ENCODE measurements at regions of chr11 and their contacts with region 1.

Region 1: DNA sequence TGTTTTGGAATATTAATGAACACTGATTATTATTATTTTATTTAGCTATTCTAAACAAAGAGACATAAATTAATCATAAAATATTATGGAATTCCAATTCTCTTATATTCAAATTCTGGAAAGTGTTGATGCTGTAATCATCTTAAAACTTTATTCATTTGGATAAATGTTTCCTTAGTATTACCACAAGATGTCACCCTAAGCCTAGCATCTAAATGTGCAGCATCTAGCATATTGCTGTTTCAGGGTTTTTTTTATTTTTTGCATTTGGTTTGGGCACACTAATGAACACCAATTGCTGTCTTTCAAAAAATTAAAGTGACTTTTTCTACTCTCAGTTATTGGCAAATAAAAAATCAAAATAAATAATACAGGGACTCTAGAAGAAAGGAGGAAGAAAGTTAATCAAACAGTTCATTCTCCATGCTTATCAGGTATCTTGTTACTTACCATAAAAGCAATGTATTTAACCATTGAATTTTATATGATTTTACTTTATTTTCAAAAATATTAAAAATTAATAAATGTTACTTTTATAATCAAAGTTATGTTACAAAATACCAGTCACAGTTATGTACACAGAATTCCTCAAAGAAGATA is 31.8 kb downstream of the DLG2 start:
- DNase-seq: no peak
- ATAC-seq: no peak
- H3K4me3 Mint-ChIP-seq: no peak overlapping the region
- H3K27ac Mint-ChIP-seq: no peak overlapping the region
- H3K4me1 Mint-ChIP-seq: no peaks in the 10 kb centered on the region
- H3K27me3 Mint-ChIP-seq: no peaks in the 10 kb centered on the region
- CTCF ChIP-seq: peak; percentile 35

Region 2: DNA sequence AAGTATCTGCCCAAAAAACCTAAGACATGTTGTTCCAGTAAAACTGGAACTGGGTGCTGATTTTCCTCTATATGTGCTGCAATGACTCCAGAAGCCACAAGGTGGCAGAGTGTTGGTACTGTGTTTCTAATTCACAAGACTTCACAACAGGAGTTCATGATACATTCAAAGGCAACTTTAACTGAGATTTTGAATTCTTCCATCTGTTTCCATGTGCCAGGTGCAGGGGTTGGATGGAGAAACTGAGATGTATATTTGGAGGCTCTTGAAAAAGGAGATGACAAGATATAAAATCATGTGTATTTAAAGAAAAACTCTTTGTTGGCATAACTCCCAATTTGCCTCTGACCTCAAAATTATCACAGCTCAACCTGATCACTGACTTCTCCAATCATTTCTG is 1210.7 kb before region 1 on chr11:
- CTCF ChIA-PET with region 1: interaction called, 8 read pairs
- POLR2A ChIA-PET with region 1: no interaction called
- intact Hi-C with region 1: loop called (anchors 1 kb)
- DNase-seq: no peak
- ATAC-seq: no peak
- H3K4me3 Mint-ChIP-seq: no peak overlapping the region
- H3K27ac Mint-ChIP-seq: no peak overlapping the region
- H3K4me1 Mint-ChIP-seq: no peaks in the 10 kb centered on the region
- H3K27me3 Mint-ChIP-seq: no peaks in the 10 kb centered on the region
- CTCF ChIP-seq: peak; percentile 93

Region 3: DNA sequence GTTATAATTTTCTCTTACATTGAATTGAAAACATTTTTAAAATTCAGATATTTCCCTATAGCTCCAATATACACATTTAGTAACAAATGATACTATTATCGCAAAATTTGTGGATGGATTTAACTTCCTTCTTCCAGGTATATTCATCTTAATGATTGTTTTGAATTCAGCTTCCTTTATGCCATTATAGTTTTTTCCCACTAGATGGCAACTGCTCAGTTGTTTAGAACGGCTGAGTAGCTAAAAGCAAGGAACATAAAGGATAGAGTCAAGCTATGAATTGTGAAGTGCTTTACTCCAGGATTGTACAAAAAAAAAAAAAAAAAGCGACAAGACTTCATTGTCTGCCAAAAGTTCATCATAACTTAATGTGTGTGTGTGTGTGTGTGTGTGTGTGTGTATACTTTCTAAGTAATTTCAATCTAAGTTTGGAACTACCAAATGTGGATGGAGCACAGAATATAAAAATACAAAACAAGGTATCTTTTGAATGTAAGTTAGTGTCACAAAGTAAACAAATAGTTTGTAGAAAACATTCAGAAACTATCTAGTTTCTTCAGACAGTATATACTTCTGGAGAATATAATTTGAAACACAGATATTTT is 814.6 kb before region 1 on chr11:
- CTCF ChIA-PET with region 1: interaction called, 16 read pairs
- POLR2A ChIA-PET with region 1: no interaction called
- intact Hi-C with region 1: loop called (anchors 1 kb)
- DNase-seq: no peak
- ATAC-seq: no peak
- H3K4me3 Mint-ChIP-seq: no peak overlapping the region
- H3K27ac Mint-ChIP-seq: no peak overlapping the region
- H3K4me1 Mint-ChIP-seq: no peaks in the 10 kb centered on the region
- H3K27me3 Mint-ChIP-seq: no peaks in the 10 kb centered on the region
- CTCF ChIP-seq: no peak

Region 4: GRCh38 chr11:85664615-85665481 is 69.5 kb after region 1 on chr11 and contains the start of gene CREBZF:
- CTCF ChIA-PET with region 1: no interaction called
- POLR2A ChIA-PET with region 1: no interaction called
- intact Hi-C with region 1: loop called (anchors 1 kb)
- DNase-seq: peak; percentile 96
- ATAC-seq: peak; percentile 86
- H3K4me3 Mint-ChIP-seq: peak within 1 kb of the TSS; percentile 95
- H3K27ac Mint-ChIP-seq: peak within 1 kb of the TSS; percentile 93
- H3K4me1 Mint-ChIP-seq: peaks cover 45% of the 10 kb centered on the region
- H3K27me3 Mint-ChIP-seq: no peaks in the 10 kb centered on the region
- CTCF ChIP-seq: no peak
- total RNA-seq, gene CREBZF: 46.1 and 60.3 TPM in 2 replicates

Region 5: DNA sequence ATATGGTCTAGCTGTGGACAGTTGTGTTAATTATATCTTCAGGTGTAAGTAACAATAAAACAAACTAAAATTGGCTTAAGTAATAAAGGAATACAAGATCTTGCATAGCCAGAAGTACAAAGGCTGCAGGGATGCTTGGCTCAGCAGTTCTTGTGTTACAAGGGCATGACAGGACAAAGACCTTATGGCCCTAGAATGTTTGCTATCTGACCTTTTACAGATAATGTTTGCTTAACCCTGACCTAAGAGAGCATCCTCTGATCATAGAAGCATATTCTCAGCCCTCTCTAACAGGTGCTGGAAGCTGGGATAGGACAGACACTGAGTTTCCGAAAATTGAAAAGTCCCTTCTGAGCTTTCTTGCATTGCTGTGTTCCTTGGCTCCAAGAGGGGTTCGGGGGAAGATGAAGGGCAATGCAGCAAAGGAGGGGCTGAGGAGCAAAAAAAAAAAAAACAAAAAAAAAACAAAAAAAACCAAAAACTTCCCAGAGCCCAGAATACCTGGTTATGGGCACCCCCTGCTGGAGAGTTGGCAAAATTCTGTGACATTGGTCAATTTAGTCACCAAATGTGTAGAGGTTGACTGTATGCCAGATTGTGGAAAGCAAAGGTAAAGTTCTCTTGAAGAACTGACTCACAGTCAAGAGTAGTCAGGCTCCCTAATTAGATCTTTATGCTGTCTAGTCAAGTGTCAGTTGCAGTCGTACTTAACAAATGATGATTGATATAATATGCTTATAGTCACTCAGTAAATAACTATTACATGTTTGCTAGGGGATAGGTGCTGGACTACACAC is 696.3 kb after region 1 on chr11:
- CTCF ChIA-PET with region 1: interaction called, 3 read pairs
- POLR2A ChIA-PET with region 1: no interaction called
- intact Hi-C with region 1: loop called (anchors 1 kb)
- DNase-seq: no peak
- ATAC-seq: peak; percentile 44
- H3K4me3 Mint-ChIP-seq: no peak overlapping the region
- H3K27ac Mint-ChIP-seq: no peak overlapping the region
- H3K4me1 Mint-ChIP-seq: peaks cover 35% of the 10 kb centered on the region
- H3K27me3 Mint-ChIP-seq: no peaks in the 10 kb centered on the region
- CTCF ChIP-seq: peak; percentile 34

Region 6: DNA sequence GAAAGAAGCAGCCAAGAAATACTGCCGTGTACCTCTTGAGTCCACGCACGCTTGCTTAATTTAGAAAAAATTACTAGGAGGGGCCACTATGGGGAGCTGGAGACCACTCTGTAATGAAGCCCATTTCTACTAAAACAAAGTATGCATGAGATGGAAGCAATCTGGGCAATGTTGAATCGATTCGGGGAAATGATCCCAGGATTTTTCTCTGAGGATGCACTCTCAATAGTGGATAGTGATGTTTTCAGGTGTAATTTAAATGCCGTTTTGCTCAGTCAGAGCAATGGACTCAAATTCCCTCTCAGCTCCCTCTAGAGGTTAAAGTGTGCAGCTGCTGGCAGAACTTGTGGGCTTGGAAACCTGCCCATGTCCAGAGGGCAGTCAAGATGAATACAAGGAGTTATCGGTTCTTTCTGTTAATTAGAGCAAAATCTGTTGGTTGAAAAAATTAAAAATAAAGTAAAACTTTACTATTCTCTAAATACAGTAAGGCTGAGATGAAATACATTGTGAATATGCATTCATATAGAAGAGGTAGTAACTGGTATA is 1012.9 kb after region 1 on chr11:
- CTCF ChIA-PET with region 1: interaction called, 5 read pairs
- POLR2A ChIA-PET with region 1: no interaction called
- intact Hi-C with region 1: loop called (anchors 5 kb)
- DNase-seq: no peak
- ATAC-seq: peak; percentile 67
- H3K4me3 Mint-ChIP-seq: no peak overlapping the region
- H3K27ac Mint-ChIP-seq: no peak overlapping the region
- H3K4me1 Mint-ChIP-seq: no peaks in the 10 kb centered on the region
- H3K27me3 Mint-ChIP-seq: peaks cover 2% of the 10 kb centered on the region
- CTCF ChIP-seq: peak; percentile 94

Region 7: GRCh38 chr11:86919557-86920210 is 1324.3 kb after region 1 on chr11:
- CTCF ChIA-PET with region 1: no interaction called
- POLR2A ChIA-PET with region 1: no interaction called
- intact Hi-C with region 1: loop called (anchors 2 kb)
- DNase-seq: no peak
- ATAC-seq: no peak
- H3K4me3 Mint-ChIP-seq: no peak overlapping the region
- H3K27ac Mint-ChIP-seq: no peak overlapping the region
- H3K4me1 Mint-ChIP-seq: no peaks in the 10 kb centered on the region
- H3K27me3 Mint-ChIP-seq: no peaks in the 10 kb centered on the region
- CTCF ChIP-seq: no peak

Measured in activated B cell treated with CpG ODN at 0.5 μM for 24 hours (primary cell).